Naive thymus-derived CD4-positive, alpha-beta T cell (primary cell): ENCODE measurements at regions of chr9 and their contacts with region 1.

Region 1: DNA sequence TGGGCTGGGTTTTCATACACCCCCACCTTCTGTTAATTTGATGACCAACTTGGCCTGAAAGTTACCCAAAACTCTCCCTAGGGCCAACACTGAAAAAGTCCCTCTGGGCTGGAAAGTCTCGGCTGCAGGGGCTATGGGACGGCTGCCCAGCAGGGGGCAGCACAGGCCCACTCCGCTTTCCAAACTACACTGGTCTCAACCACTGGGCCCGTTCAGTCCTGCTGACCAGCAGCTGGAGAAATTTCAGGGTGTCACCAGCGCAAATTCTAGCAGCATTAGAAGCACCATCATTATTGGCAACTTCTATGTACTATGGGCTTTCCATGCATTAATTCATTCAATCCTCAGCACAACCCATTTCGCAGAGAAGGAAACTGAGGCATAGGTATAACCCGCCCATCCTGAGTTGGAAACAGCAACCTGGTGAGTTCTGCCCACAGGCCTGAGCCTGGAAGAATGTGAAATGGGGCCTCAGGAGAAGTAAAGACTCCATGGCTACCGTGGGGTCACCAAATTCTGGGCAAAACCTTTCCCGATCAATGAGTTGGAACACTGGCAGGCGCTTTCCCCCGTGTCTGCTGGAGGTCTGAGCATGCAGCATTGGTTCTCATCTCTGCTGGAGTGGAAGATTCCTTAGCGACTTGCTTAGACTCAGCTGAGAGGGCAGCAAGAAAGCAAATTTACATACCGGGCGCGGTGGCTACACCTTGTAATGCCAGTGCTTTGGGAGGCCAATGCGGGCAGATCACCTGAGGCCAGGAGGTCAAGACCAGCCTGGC is 9.7 kb downstream of the ORM2 start:
- DNase-seq: peak in 8 of 9 donors; percentile 19 to 64 (median 50)
- ATAC-seq: peak; percentile 83
- H3K4me3 ChIP-seq: no peak overlapping the region
- H3K4me3 Mint-ChIP-seq: no peak overlapping the region
- H3K27ac ChIP-seq: peak overlapping the region; percentile 14
- H3K27ac Mint-ChIP-seq: peak overlapping the region in 6 of 9 donors; percentile 15 to 76 (median 67)
- H3K4me1 ChIP-seq: no peaks in the 10 kb centered on the region
- H3K4me1 Mint-ChIP-seq: peaks cover 8 to 37% (median 17%) of the 10 kb centered on the region in 7 donors
- H3K27me3 ChIP-seq: no peaks in the 10 kb centered on the region
- H3K27me3 Mint-ChIP-seq: no peaks in the 10 kb centered on the region

Region 2: GRCh38 chr9:114184074-114184473 is 155.2 kb before region 1 on chr9:
- CTCF ChIA-PET with region 1: no interaction called
- POLR2A ChIA-PET with region 1: no interaction called
- intact Hi-C with region 1: no loop called
- DNase-seq: no peak
- ATAC-seq: no peak
- H3K4me3 ChIP-seq: no peak overlapping the region
- H3K4me3 Mint-ChIP-seq: no peak overlapping the region
- H3K27ac ChIP-seq: no peak overlapping the region
- H3K27ac Mint-ChIP-seq: no peak overlapping the region
- H3K4me1 ChIP-seq: no peaks in the 10 kb centered on the region
- H3K4me1 Mint-ChIP-seq: no peaks in the 10 kb centered on the region
- H3K27me3 ChIP-seq: no peaks in the 10 kb centered on the region
- H3K27me3 Mint-ChIP-seq: peaks cover 0 to 3% (median 0%) of the 10 kb centered on the region in 5 donors

Region 3: DNA sequence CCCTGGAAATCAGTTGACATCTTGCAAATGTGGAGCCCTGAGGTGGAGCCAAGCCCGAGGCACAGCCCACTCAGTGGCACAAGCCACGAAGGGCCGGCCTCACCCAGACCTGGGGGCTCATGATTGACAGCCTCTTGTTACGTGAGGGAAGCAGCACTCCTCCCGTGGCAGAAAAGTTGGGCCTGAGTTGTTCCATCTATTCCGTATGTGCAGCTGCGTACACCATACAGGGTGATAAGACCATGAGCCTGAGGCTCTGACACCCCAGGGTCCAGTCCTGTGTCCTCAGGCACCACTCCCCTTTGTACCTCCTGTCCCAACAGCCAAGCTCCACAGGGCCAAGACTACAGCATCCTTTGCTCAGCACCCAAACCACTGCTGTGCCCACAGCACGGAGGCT is 11.6 kb before region 1 on chr9:
- CTCF ChIA-PET with region 1: no interaction called
- POLR2A ChIA-PET with region 1: no interaction called
- intact Hi-C with region 1: loop called in 1 of 2 experiments (anchors 1 kb)
- DNase-seq: no peak
- ATAC-seq: no peak
- H3K4me3 ChIP-seq: no peak overlapping the region
- H3K4me3 Mint-ChIP-seq: no peak overlapping the region
- H3K27ac ChIP-seq: no peak overlapping the region
- H3K27ac Mint-ChIP-seq: no peak overlapping the region
- H3K4me1 ChIP-seq: peaks cover 0 to 4% of the 10 kb centered on the region in 2 donors
- H3K4me1 Mint-ChIP-seq: peaks cover 0 to 22% (median 9%) of the 10 kb centered on the region in 7 donors
- H3K27me3 ChIP-seq: no peaks in the 10 kb centered on the region
- H3K27me3 Mint-ChIP-seq: no peaks in the 10 kb centered on the region

Region 4: DNA sequence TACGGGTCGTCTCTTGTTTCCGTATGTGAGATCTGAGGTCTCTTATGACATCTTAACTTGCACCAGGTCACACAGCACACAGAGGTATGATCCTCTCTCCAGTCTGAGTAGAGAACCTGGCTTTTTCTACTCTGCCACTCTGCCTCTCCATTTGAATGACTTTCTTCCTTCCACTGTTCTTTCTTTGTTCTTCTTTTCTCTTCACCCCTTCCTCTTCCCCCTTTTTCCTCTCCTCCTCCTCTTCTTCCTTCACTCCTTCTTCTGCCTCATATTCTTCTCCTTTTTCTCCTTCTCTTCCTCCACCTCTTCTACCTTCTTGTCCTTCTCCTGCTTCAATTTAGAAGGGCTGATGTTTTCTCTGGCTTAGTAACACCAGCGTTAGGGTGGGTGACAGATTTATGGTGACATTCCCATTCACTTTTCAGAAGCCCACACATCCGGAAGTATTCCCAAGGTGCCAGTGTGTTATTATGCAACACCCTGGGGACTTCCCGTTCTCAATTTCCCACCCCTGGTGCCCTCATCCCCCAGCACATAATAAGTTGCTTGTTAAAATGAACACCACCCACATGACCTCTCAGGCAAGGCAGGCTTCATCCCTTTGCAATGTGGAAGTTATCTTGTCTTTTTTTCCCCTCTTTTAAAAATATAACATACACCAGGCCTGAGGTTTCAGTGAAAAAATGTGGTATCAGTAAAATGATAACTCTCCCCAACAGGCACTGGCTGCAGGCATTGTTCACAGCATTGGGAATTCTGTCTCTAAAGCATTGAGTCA is 1936.3 kb after region 1 on chr9:
- CTCF ChIA-PET with region 1: no interaction called
- POLR2A ChIA-PET with region 1: no interaction called
- intact Hi-C with region 1: no loop called
- DNase-seq: no peak
- ATAC-seq: no peak
- H3K4me3 ChIP-seq: no peak overlapping the region
- H3K4me3 Mint-ChIP-seq: no peak overlapping the region
- H3K27ac ChIP-seq: no peak overlapping the region
- H3K27ac Mint-ChIP-seq: no peak overlapping the region
- H3K4me1 ChIP-seq: no peaks in the 10 kb centered on the region
- H3K4me1 Mint-ChIP-seq: no peaks in the 10 kb centered on the region
- H3K27me3 ChIP-seq: peaks cover 0 to 4% of the 10 kb centered on the region in 2 donors
- H3K27me3 Mint-ChIP-seq: peaks cover 0 to 35% (median 18%) of the 10 kb centered on the region in 5 donors